ENCODE measurements at regions of chr3 and their contacts with region 1.

Region 1: DNA sequence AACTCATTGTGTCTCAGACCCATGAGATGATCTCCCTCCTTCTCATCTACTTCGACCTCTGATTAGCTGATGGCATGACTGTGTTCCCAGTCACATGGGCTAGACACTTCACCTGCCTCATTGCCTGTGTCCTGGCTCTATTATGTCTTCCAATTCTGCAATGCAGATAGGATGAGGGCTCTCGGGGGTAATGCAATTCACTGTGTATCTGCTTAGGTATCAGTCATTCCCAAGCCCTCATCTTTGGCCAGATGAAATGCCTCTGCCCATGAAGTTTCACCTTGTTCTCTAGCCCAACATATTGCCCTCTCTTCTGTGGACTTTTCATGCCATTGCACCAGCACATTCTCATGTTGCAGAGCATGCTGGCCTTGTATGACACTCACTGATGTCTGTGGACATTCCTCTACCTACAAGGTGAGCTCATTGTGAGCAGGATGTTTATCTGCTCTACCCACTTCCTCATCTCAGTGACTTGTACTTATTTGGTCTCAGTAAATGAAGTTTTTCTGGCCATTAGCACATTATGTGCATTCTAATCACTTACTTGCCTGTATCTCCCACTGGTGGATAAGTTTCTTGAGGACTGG is 32.3 kb downstream of the MOBP start:
- DNase-seq: peak; percentile 10
- H3K4me3 ChIP-seq: no peak overlapping the region
- H3K27ac ChIP-seq: no peak overlapping the region
- H3K4me1 ChIP-seq: peaks cover 9% of the 10 kb centered on the region
- H3K27me3 ChIP-seq: peaks cover 23% of the 10 kb centered on the region
- CTCF ChIP-seq: no peak

Region 2: GRCh38 chr3:39406368-39407258 is 93.1 kb before region 1 on chr3 and contains the start of gene RPSA:
- CTCF ChIA-PET with region 1: no interaction called
- dilution Hi-C with region 1: no loop called
- in situ Hi-C with region 1: no loop called
- intact Hi-C with region 1: loop called (anchors 2 kb)
- DNase-seq: peak; percentile 98
- H3K4me3 ChIP-seq: peak within 1 kb of the TSS; percentile 58 to 95 (median 92)
- H3K27ac ChIP-seq: peak within 1 kb of the TSS; percentile 93
- H3K4me1 ChIP-seq: peaks cover 19% of the 10 kb centered on the region
- H3K27me3 ChIP-seq: no peaks in the 10 kb centered on the region
- CTCF ChIP-seq: peak; percentile 25 to 55
- total RNA-seq, gene RPSA: 874 to 1,396 TPM

Region 3: GRCh38 chr3:39414421-39414907 is 85.3 kb before region 1 on chr3:
- CTCF ChIA-PET with region 1: no interaction called
- dilution Hi-C with region 1: no loop called
- in situ Hi-C with region 1: no loop called
- intact Hi-C with region 1: loop called (anchors 1 kb)
- DNase-seq: no peak
- H3K4me3 ChIP-seq: no peak overlapping the region
- H3K27ac ChIP-seq: no peak overlapping the region
- H3K4me1 ChIP-seq: peaks cover 5% of the 10 kb centered on the region
- H3K27me3 ChIP-seq: no peaks in the 10 kb centered on the region
- CTCF ChIP-seq: no peak

Region 4: DNA sequence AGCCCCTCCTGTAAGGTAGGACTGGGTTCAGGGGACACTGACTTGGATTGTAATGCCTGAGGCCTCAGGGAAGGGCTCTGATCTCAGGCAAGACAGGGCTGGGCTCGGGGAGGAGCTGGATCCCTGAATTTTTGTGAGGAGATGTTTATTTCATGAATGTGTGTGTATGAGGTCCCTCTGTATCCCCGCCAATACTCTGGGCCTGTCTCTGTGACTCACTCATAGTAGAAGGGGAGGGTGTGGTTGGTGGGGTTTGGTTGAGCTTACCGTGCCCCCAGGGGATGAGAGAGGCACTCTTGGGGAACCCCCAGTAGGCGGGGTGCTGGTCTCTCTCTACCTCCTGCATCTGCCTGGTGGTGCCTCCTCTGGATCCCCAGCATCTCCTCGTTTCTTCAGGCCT is 65.2 kb before region 1 on chr3:
- CTCF ChIA-PET with region 1: no interaction called
- dilution Hi-C with region 1: no loop called
- in situ Hi-C with region 1: no loop called
- intact Hi-C with region 1: no loop called
- DNase-seq: peak; percentile 83
- H3K4me3 ChIP-seq: no peak overlapping the region
- H3K27ac ChIP-seq: no peak overlapping the region
- H3K4me1 ChIP-seq: peaks cover 3% of the 10 kb centered on the region
- H3K27me3 ChIP-seq: no peaks in the 10 kb centered on the region
- CTCF ChIP-seq: no peak

Region 5: DNA sequence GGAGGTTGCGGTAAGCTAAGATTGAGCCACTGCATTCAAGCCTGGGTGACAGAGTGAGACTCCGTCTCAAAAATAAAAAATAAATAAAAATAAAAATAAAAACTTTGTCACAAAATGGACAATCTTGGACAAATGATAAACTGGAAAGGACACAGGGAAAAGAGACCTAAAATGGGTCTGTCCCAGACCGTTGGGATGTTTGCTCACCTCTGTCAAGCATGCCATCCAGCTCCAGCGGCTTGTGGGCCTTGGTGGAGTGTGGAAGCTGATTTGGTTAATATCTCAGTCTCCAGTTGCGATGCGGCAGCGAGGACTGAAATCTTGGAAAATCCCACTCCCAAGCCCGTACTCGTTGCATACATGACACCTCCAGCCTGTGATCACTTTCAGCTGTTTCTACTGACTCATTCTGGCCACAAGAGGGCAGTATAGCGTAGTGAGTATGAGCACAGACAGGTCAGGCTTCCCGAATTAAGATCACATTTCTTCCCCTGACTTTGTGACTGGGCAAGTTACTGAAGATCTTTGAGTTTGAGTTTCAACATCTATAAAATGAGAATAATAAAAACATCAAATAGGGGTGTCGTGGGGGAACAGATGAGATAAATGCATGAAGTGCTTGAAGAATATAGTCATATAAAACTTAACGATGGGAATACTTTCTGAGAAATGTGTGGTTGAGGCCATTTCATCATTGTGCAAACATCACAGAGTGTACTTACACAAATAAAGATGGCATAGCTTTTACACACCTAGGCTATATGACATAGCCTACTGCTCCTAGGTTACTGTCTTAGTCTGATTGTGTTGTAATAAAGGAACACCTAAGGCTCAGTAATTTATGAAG is 51.9 kb before region 1 on chr3:
- CTCF ChIA-PET with region 1: interaction called, 9 read pairs
- dilution Hi-C with region 1: no loop called
- in situ Hi-C with region 1: loop called in 1 of 2 experiments (anchors 5 kb)
- intact Hi-C with region 1: loop called (anchors 1 kb)
- DNase-seq: peak; percentile 79
- H3K4me3 ChIP-seq: no peak overlapping the region
- H3K27ac ChIP-seq: no peak overlapping the region
- H3K4me1 ChIP-seq: no peaks in the 10 kb centered on the region
- H3K27me3 ChIP-seq: no peaks in the 10 kb centered on the region
- CTCF ChIP-seq: peak; percentile 88 to 93

Region 6: DNA sequence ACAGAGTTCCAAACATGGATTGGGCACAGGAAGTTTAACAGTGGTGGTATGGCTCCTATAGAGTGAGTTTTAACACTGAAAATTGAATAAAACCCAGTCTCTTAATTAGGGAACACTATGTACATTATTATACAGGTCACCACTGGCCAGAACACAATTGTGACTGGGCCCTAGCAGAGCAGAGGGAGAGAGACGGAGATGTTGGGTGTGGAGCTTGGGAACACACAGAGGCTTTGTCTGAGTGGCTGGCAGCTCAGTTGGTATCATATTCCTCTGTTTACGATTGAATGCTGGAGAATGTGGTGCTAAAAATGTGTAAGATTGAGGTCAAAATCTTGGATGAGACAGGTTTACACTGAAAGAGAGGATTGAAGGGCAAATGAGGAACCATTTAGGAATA is 39.1 kb before region 1 on chr3:
- CTCF ChIA-PET with region 1: no interaction called
- dilution Hi-C with region 1: no loop called
- in situ Hi-C with region 1: no loop called
- intact Hi-C with region 1: no loop called
- DNase-seq: no peak
- H3K4me3 ChIP-seq: no peak overlapping the region
- H3K27ac ChIP-seq: no peak overlapping the region
- H3K4me1 ChIP-seq: no peaks in the 10 kb centered on the region
- H3K27me3 ChIP-seq: no peaks in the 10 kb centered on the region
- CTCF ChIP-seq: no peak